Gastrocnemius medialis (tissue), 4 donors: ENCODE measurements at regions of chr3 and their contacts with region 1.

Region 1: GRCh38 chr3:150146991-150147761 is 176.5 kb upstream of the PFN2 start:
- DNase-seq: peak; percentile 84 to 91
- ATAC-seq: peak; percentile 62 to 63
- H3K4me3 ChIP-seq: peak overlapping the region; percentile 1 to 21 (median 4)
- H3K27ac ChIP-seq: peak overlapping the region; percentile 85 to 97 (median 94)
- H3K4me1 ChIP-seq: peaks cover 53 to 66% of the 10 kb centered on the region in 2 donors
- H3K27me3 ChIP-seq: no peaks in the 10 kb centered on the region
- CTCF ChIP-seq: no peak
- POLR2A ChIP-seq: peak in 1 of 2 donors; percentile 19

Region 2: GRCh38 chr3:149009732-149010131 is 1137.4 kb before region 1 on chr3:
- in situ Hi-C with region 1: no loop called
- intact Hi-C with region 1: loop called (anchors 10 kb)
- DNase-seq: no peak
- ATAC-seq: peak in 1 of 2 donors; percentile 10
- H3K4me3 ChIP-seq: no peak overlapping the region
- H3K27ac ChIP-seq: peak overlapping the region; percentile 98 to 100 (median 100)
- H3K4me1 ChIP-seq: peaks cover 87 to 88% of the 10 kb centered on the region in 2 donors
- H3K27me3 ChIP-seq: no peaks in the 10 kb centered on the region
- CTCF ChIP-seq: no peak
- POLR2A ChIP-seq: no peak

Region 3: GRCh38 chr3:150035301-150035779 is 111.8 kb before region 1 on chr3:
- in situ Hi-C with region 1: no loop called
- intact Hi-C with region 1: loop called (anchors 2 kb)
- DNase-seq: peak; percentile 75 to 77
- ATAC-seq: peak; percentile 77 to 87
- H3K4me3 ChIP-seq: peak overlapping the region in 1 of 4 donors; percentile 18
- H3K27ac ChIP-seq: peak overlapping the region; percentile 91 to 98 (median 94)
- H3K4me1 ChIP-seq: peaks cover 17 to 31% of the 10 kb centered on the region in 2 donors
- H3K27me3 ChIP-seq: no peaks in the 10 kb centered on the region
- CTCF ChIP-seq: peak in 2 of 5 experiments; percentile 19 to 25
- POLR2A ChIP-seq: no peak

Region 4: GRCh38 chr3:150094150-150094925 is 52.8 kb before region 1 on chr3:
- in situ Hi-C with region 1: no loop called
- intact Hi-C with region 1: loop called (anchors 1 kb)
- DNase-seq: peak; percentile 91 to 95
- ATAC-seq: peak; percentile 79 to 88
- H3K4me3 ChIP-seq: peak overlapping the region in 1 of 4 donors; percentile 24
- H3K27ac ChIP-seq: peak overlapping the region; percentile 82 to 97 (median 90)
- H3K4me1 ChIP-seq: peaks cover 35 to 60% of the 10 kb centered on the region in 2 donors
- H3K27me3 ChIP-seq: no peaks in the 10 kb centered on the region
- CTCF ChIP-seq: peak in 2 of 5 experiments; percentile 5 to 15
- POLR2A ChIP-seq: peak; percentile 31 to 55

Region 5: DNA sequence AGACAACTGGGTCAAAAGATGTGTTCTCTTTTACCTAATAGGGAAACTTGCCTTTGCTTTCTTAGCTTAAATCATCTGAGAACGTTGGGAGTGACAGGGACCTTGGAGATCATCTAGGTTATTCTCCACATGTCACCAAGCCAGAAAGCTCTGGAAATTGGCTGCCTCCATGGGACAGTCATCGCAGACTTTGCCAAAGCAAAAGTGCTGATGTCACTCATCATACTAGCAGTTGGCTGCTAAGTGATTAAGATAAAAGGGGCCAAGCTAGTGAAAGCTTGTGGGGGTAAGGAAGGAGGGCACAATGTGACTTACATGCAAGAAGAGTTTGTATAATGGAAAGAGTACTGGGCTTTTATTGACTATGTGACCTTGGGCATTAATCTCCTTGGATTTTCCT is 21.5 kb after region 1 on chr3:
- in situ Hi-C with region 1: no loop called
- intact Hi-C with region 1: loop called (anchors 2 kb)
- DNase-seq: peak; percentile 62 to 84
- ATAC-seq: peak; percentile 99
- H3K4me3 ChIP-seq: no peak overlapping the region
- H3K27ac ChIP-seq: peak overlapping the region; percentile 73 to 89 (median 80)
- H3K4me1 ChIP-seq: peaks cover 25 to 31% of the 10 kb centered on the region in 2 donors
- H3K27me3 ChIP-seq: no peaks in the 10 kb centered on the region
- CTCF ChIP-seq: no peak
- POLR2A ChIP-seq: no peak